Cardiac septum (tissue), 1 donor: ENCODE measurements at regions of chr18 and their contacts with region 1.

Region 1: GRCh38 chr18:66495844-66496243 is 108.0 kb downstream of the CDH19 start:
- DNase-seq: peak; percentile 76

Region 2: GRCh38 chr18:65725251-65726050 is 770.4 kb before region 1 on chr18:
- intact Hi-C with region 1: loop called (anchors 5 kb)
- DNase-seq: no peak

Region 3: GRCh38 chr18:65968239-65969004 is 527.4 kb before region 1 on chr18:
- intact Hi-C with region 1: loop called (anchors 10 kb)
- DNase-seq: no peak

Region 4: DNA sequence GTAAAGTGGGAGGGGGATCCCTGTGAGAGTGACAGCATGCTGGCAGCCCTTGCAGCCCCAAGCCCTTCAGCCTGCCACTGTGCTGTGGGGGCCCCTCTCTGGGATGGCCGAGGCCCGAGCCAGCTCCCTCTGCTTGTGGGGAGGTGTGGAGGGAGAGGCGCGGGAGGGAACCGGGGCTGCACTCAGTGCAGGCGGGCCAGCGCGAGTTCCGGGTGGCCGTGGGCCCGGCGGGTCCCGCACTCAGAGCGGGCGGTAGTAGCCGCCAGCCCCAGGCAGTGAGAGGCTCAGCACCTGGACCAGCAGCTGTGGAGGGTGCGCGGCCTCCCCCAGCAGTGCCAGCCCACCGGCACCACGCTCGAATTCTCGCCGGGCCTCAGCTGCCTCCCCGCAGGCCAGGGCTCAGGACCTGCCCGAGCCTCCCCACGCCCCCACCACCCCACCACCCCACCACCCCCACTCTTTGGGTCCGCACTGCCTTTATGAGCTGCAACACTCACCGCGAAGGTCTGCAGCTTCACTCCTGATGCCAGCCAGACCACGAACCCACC is 100.1 kb before region 1 on chr18:
- intact Hi-C with region 1: no loop called
- DNase-seq: no peak